ENCODE measurements at regions of chr20 and their contacts with region 1.

Region 1: GRCh38 chr20:8722276-8722928 is 346.5 kb upstream of the PLCB4 start:
- DNase-seq: peak in 3 of 10 donors; percentile 27 to 41 (median 34)
- H3K4me3 ChIP-seq: no peak overlapping the region
- H3K27ac ChIP-seq: no peak overlapping the region
- H3K27me3 ChIP-seq: peaks cover 0 to 3% (median 0%) of the 10 kb centered on the region in 45 donors
- CTCF ChIP-seq: peak; percentile 60 to 96 (median 81)

Region 2: GRCh38 chr20:7935027-7935551 is 787.3 kb before region 1 on chr20:
- intact Hi-C with region 1: loop called in 1 of 2 experiments (anchors 2 kb)
- DNase-seq: no peak
- H3K4me3 ChIP-seq: no peak overlapping the region
- H3K27ac ChIP-seq: peak overlapping the region in 8 of 59 donors; percentile 2 to 77 (median 60)
- H3K27me3 ChIP-seq: no peaks in the 10 kb centered on the region
- CTCF ChIP-seq: no peak

Region 3: DNA sequence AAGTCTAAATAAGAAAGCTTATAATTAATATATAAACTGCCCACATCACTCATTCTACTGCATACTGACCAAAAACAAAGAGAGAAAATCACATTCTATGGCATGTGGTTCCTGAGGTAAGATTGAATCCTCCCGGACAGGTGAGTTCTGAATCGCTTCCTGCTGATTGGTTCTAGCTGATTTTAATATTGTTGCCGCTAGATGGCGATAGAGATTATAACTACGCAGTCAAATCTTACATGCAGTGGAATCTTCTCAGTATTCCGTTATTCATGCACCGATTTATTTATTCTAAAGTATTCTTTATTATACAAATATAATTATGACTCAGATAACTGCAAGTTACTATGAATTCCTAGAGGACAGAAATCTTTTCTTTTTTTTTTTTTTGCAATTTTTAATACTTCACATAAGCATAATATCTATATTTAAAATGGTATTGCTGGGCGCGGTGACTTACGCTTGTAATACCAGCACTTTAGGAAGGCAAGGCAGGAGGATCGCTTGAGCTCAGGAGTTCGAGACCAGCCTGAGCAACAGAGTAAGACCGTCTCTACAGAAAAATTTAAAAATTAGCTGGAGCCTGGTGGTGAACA is 678.6 kb before region 1 on chr20:
- intact Hi-C with region 1: loop called (anchors 2 to 5 kb)
- DNase-seq: peak in 1 of 10 donors; percentile 27
- H3K4me3 ChIP-seq: peak overlapping the region in 19 of 59 donors; percentile 0 to 38 (median 20)
- H3K27ac ChIP-seq: no peak overlapping the region
- H3K27me3 ChIP-seq: peaks cover 0 to 2% (median 0%) of the 10 kb centered on the region in 45 donors
- CTCF ChIP-seq: peak; percentile 63 to 96 (median 80)

Region 4: GRCh38 chr20:8131598-8132483 is 590.6 kb before region 1 on chr20 and contains the start of gene PLCB1:
- intact Hi-C with region 1: loop called (anchors 5 kb)
- DNase-seq: peak; percentile 61 to 88 (median 79)
- H3K4me3 ChIP-seq: peak within 1 kb of the TSS; percentile 55 to 87 (median 74)
- H3K27ac ChIP-seq: peak within 1 kb of the TSS in 58 of 59 donors; percentile 24 to 94 (median 84)
- H3K27me3 ChIP-seq: peaks cover 0 to 43% (median 0%) of the 10 kb centered on the region in 45 donors
- CTCF ChIP-seq: peak; percentile 29 to 91 (median 78)
- total RNA-seq, gene PLCB1: 68.3 to 259 (median 170) TPM

Region 5: DNA sequence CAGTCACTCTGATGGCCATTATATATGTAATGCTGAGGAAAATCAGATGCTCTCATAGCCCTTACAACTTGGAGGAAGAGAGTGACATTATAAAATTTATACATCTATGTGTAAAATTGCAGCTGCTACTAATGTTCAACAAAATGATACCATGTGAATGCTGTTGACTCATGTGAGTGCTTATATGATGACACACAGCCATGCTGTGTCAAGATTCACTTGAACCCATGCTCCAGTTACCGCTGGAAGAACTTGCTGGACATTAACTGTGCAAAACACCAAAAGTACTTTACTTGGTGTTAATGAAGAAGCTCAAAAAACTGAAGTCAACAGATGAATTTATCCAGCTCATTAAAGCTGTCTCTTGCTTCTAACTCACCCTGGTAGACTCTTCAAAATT is 27.6 kb after region 1 on chr20:
- intact Hi-C with region 1: no loop called
- DNase-seq: no peak
- H3K4me3 ChIP-seq: no peak overlapping the region
- H3K27ac ChIP-seq: no peak overlapping the region
- H3K27me3 ChIP-seq: no peaks in the 10 kb centered on the region
- CTCF ChIP-seq: no peak

Measured in dorsolateral prefrontal cortex (tissue), 120 donors.